ENCODE measurements at regions of chr5 and their contacts with region 1.

Region 1: DNA sequence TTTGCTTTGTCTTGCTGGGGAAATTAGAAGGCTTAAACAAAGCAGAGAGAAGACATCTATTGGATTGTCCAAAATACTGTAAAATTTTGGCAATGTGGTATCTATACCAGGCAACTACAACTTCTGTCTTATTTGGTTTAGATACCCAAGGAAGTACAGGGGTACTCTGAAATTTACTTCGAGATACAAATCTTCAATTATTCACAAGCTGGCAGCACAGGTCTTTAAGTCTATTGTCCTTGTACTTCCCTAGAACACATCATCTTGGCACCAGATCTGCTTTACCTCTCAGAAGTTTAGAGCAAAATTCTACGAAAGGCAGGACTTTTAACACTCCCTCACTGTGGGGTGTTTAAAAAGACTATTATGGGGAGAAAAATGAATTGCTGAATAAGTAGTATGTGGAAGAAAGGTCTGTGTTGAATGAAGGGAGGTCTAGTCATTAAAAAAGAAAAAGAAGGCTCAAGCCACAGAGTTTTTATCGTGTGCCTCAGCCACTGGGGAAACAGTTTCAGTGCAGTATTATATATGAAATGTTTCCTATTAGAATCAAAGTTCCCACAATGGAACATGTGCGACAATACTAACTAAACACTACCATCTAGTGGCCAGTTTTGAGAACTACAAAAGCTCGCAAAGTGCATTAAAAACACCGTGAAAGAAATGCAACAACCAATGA is 93.7 kb downstream of the PDE4D start:
- DNase-seq: peak; percentile 82
- H3K4me3 ChIP-seq: no peak overlapping the region
- H3K27ac ChIP-seq: peak overlapping the region; percentile 62
- H3K4me1 ChIP-seq: peaks cover 22% of the 10 kb centered on the region
- H3K27me3 ChIP-seq: no peaks in the 10 kb centered on the region
- CTCF ChIP-seq: peak; percentile 33 to 59
- POLR2A ChIP-seq: no peak

Region 2: DNA sequence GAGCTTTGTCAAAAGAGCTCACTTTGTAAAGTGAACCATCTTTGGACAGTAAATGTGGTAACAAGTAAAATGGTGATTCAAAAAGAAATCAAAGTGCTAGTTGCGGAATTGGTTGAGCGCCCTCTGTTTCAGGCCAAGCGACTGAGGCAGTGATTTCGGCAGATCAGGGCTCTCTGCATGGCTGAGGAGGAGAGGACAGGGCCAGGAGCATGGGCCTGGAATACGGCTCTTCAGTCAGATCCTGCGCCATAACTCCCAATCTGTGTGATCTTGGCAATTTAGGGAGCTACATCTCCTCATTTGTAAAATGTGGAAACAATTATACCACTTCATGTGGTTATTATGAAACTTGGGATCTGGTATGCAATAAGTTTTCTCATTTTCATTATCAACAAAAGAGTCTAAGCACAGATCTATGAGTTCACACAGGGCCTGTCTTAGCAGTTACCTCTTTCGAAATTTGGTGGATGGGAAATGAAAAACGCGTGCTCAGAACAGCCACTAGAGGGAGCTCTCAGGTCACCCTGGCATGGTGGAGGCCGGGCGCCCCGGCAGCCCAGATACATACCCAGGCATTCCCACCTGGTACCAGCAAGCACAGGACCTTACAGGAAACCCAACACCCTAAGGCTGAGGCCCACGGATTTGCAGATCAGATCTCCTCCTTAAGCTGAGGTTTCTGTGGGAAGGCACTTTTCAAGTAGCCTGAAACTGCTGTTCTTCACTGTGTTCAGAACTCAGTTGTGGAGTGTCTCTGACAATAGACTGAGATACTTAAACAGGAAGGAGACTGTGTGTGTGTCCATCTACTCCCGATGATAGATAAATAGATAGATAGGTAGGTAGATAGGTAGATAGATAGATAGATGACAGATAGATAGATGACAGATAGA is 913.2 kb before region 1 on chr5:
- CTCF ChIA-PET with region 1: interaction called, 17 read pairs
- POLR2A ChIA-PET with region 1: no interaction called
- dilution Hi-C with region 1: no loop called
- intact Hi-C with region 1: no loop called
- DNase-seq: peak; percentile 44
- H3K4me3 ChIP-seq: no peak overlapping the region
- H3K27ac ChIP-seq: no peak overlapping the region
- H3K4me1 ChIP-seq: no peaks in the 10 kb centered on the region
- H3K27me3 ChIP-seq: peaks cover 7 to 12% of the 10 kb centered on the region in 2 experiments
- CTCF ChIP-seq: peak; percentile 84 to 90
- POLR2A ChIP-seq: no peak

Region 3: DNA sequence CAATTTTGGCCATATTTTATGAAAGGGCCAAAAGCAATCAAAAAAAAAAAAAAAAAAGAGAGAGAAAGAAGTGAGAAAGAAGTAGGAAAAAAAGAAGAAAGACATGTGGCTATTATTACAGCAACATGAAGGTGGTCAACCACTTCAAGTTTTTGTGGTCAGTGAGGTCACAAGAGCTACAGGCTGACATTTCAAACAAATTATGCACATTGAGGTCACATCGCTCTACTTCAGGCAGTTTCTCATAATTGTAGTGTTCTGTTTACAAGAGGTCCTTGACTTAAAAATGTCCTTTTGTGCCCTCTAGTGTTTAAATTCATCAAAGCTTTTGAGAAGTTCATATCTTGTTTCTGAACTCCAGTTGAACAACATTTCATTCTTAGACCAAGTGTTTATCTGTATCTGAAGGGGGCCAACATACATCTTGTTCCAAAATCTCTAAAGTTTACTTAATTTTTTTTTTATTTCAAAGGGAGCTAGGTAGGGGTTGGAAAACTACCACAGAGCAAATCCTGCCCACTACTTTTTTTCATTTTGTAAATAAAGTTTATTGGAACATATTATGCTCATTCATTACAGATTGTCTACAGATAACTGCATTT is 419.4 kb before region 1 on chr5:
- CTCF ChIA-PET with region 1: interaction called, 13 read pairs
- POLR2A ChIA-PET with region 1: no interaction called
- dilution Hi-C with region 1: no loop called
- intact Hi-C with region 1: no loop called
- DNase-seq: peak; percentile 71
- H3K4me3 ChIP-seq: no peak overlapping the region
- H3K27ac ChIP-seq: no peak overlapping the region
- H3K4me1 ChIP-seq: no peaks in the 10 kb centered on the region
- H3K27me3 ChIP-seq: no peaks in the 10 kb centered on the region
- CTCF ChIP-seq: peak; percentile 20 to 26
- POLR2A ChIP-seq: no peak

Region 4: DNA sequence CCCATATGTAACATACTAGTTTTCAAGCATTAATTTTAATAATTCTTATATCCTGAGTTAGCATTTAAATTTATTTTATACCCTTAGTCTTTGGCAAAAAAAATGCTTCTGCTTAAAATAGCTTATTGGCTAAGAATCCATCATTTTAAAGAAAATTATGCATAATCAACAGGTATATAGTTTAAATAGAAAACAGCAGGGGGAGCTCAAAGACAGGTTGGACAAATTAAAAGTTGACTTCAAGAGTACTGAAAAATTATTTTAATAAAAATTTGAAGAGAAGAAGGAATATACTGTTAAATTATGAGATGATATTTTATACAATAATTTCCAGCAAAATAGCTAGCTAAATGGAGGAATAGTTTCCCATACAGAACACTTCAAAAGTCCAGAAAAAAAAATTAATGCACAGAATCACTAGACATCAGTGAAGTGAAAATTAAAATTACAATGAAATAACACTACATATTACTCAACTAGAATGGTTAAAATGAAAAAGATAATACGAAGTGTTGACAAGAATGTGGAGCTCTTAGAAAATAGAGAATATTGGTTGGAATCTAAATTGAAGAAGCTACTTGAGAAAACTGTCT is 293.4 kb before region 1 on chr5:
- CTCF ChIA-PET with region 1: interaction called, 74 read pairs
- POLR2A ChIA-PET with region 1: no interaction called
- dilution Hi-C with region 1: no loop called
- intact Hi-C with region 1: loop called (anchors 1 kb)
- DNase-seq: peak; percentile 39
- H3K4me3 ChIP-seq: no peak overlapping the region
- H3K27ac ChIP-seq: no peak overlapping the region
- H3K4me1 ChIP-seq: no peaks in the 10 kb centered on the region
- H3K27me3 ChIP-seq: peaks cover 0 to 4% of the 10 kb centered on the region in 2 experiments
- CTCF ChIP-seq: peak; percentile 2 to 6
- POLR2A ChIP-seq: no peak

Region 5: DNA sequence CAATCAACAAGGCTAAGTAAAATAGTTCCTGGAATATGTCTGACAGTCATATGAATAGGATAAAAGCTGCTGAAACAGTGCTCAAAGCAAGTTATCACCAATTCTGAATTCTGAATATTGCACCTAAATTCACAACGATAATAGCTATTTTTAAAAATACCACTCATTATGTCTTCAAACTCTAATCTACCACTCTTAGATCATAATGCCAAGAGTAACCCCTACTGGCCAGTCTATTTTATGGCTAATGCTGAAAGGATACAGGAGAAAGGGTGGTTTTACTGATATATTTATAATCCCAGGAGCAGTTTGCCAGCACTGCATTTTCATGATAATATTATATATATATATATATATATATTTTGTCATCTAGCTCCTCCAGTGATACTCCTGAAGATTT is 139.1 kb before region 1 on chr5:
- CTCF ChIA-PET with region 1: interaction called, 16 read pairs
- POLR2A ChIA-PET with region 1: no interaction called
- dilution Hi-C with region 1: no loop called
- intact Hi-C with region 1: loop called (anchors 1 kb)
- DNase-seq: peak; percentile 52
- H3K4me3 ChIP-seq: no peak overlapping the region
- H3K27ac ChIP-seq: no peak overlapping the region
- H3K4me1 ChIP-seq: peaks cover 21% of the 10 kb centered on the region
- H3K27me3 ChIP-seq: no peaks in the 10 kb centered on the region
- CTCF ChIP-seq: peak; percentile 22 to 27
- POLR2A ChIP-seq: no peak

Region 6: GRCh38 chr5:59724482-59725391 is 75.1 kb before region 1 on chr5:
- CTCF ChIA-PET with region 1: interaction called, 5 read pairs
- POLR2A ChIA-PET with region 1: no interaction called
- dilution Hi-C with region 1: no loop called
- intact Hi-C with region 1: loop called (anchors 1 kb)
- DNase-seq: peak; percentile 39
- H3K4me3 ChIP-seq: no peak overlapping the region
- H3K27ac ChIP-seq: no peak overlapping the region
- H3K4me1 ChIP-seq: peaks cover 17% of the 10 kb centered on the region
- H3K27me3 ChIP-seq: no peaks in the 10 kb centered on the region
- CTCF ChIP-seq: peak; percentile 36 to 66
- POLR2A ChIP-seq: no peak

Region 7: GRCh38 chr5:59760798-59761348 is 38.9 kb before region 1 on chr5:
- CTCF ChIA-PET with region 1: interaction called, 3 read pairs
- POLR2A ChIA-PET with region 1: no interaction called
- dilution Hi-C with region 1: no loop called
- intact Hi-C with region 1: loop called (anchors 1 kb)
- DNase-seq: peak; percentile 88
- H3K4me3 ChIP-seq: peak overlapping the region in 1 of 3 experiments; percentile 48
- H3K27ac ChIP-seq: peak overlapping the region; percentile 98
- H3K4me1 ChIP-seq: peaks cover 62% of the 10 kb centered on the region
- H3K27me3 ChIP-seq: no peaks in the 10 kb centered on the region
- CTCF ChIP-seq: no peak
- POLR2A ChIP-seq: no peak

Region 8: DNA sequence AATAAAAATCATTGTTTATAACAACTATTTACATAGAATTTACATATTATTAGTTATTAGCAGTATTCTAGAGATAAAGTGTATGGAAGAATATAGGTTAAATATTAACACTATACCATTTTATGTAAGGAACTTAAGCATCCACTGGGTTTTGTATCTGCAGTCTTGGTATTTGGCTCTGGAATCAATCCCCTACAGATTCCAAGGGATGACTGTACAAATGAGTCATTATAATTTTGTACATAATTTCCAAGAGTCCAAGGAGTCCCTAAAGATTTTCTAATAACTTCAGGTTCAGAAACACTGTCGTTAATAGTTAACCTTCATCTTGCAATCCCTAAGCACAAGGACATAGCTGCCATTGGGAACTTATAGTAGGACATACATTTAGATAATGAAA is 348.5 kb after region 1 on chr5:
- CTCF ChIA-PET with region 1: no interaction called
- POLR2A ChIA-PET with region 1: no interaction called
- dilution Hi-C with region 1: no loop called
- intact Hi-C with region 1: no loop called
- DNase-seq: no peak
- H3K4me3 ChIP-seq: no peak overlapping the region
- H3K27ac ChIP-seq: no peak overlapping the region
- H3K4me1 ChIP-seq: no peaks in the 10 kb centered on the region
- H3K27me3 ChIP-seq: no peaks in the 10 kb centered on the region
- CTCF ChIP-seq: no peak
- POLR2A ChIP-seq: no peak

Measured in endothelial cell of umbilical vein (primary cell).